Caco-2 (cell line): ENCODE measurements at regions of chr15 and their contacts with region 1.

Region 1: DNA sequence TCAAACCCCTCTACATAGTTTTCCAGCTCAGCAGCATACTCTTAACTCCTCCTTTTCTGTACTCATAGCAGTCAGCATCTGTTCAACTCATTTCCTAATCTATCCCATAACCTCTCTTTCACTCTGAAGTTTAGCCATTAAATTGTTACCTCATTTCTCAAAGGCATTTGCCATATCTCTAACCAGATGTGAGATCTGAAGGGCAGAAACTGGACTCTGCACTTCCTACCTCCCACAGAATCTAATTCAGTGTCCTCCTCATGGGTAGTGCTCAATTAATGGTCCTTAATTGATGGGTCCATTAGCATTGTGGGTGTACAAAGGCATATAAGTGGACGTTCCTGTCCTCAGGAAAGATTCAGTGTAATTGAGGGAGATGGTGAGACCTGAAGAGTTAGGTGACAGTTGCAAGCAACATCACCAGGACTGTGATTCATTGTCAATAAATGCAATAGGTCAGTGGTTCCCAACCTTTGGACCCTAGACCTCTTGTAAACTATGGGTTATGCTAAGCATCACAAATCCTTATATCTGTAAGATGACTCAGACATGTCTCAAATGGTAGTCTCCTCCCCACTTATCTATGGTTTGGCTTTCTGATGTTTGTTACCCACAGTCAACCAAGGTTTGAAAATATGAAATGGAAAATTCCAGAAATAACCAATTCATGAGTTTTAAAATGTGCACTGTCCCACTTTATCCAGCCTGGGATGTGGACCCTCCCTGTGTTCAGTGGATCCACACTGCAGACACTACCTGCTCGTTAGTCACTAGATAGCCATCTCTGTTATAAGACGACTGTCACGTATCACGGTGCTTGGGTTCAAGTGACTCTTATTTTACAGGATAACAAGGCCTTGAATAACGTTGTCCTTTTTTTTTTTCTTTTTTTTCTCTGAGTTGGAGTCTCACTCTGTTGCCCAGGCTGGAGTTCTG is 25.0 kb upstream of the UACA start:
- DNase-seq: peak; percentile 83 to 84
- H3K4me3 ChIP-seq: no peak overlapping the region
- H3K4me3 Mint-ChIP-seq: peak overlapping the region; percentile 55
- H3K27ac Mint-ChIP-seq: peak overlapping the region; percentile 91
- H3K4me1 ChIP-seq: peaks cover 84% of the 10 kb centered on the region
- H3K4me1 Mint-ChIP-seq: peaks cover 42% of the 10 kb centered on the region
- H3K27me3 ChIP-seq: no peaks in the 10 kb centered on the region
- H3K27me3 Mint-ChIP-seq: no peaks in the 10 kb centered on the region
- CTCF ChIP-seq: no peak

Region 2: GRCh38 chr15:69760890-69761568 is 1027.4 kb before region 1 on chr15:
- CTCF ChIA-PET with region 1: no interaction called
- POLR2A ChIA-PET with region 1: no interaction called
- intact Hi-C with region 1: no loop called
- DNase-seq: peak; percentile 32 to 48
- H3K4me3 ChIP-seq: no peak overlapping the region
- H3K4me3 Mint-ChIP-seq: no peak overlapping the region
- H3K27ac Mint-ChIP-seq: no peak overlapping the region
- H3K4me1 ChIP-seq: 0 out of 2 replicates have a peak, but pooled peaks cover 7% of the 10 kb centered on the region
- H3K4me1 Mint-ChIP-seq: peaks cover 16% of the 10 kb centered on the region
- H3K27me3 ChIP-seq: no peaks in the 10 kb centered on the region
- H3K27me3 Mint-ChIP-seq: peaks cover 2% of the 10 kb centered on the region
- CTCF ChIP-seq: no peak

Region 3: GRCh38 chr15:70713714-70714414 is 74.5 kb before region 1 on chr15:
- CTCF ChIA-PET with region 1: interaction called, 5 read pairs
- POLR2A ChIA-PET with region 1: no interaction called
- intact Hi-C with region 1: loop called (anchors 2 kb)
- DNase-seq: peak in 1 of 2 experiments; percentile 25
- H3K4me3 ChIP-seq: no peak overlapping the region
- H3K4me3 Mint-ChIP-seq: peak overlapping the region; percentile 60
- H3K27ac Mint-ChIP-seq: peak overlapping the region; percentile 34
- H3K4me1 ChIP-seq: peaks cover 89% of the 10 kb centered on the region
- H3K4me1 Mint-ChIP-seq: peaks cover 48% of the 10 kb centered on the region
- H3K27me3 ChIP-seq: no peaks in the 10 kb centered on the region
- H3K27me3 Mint-ChIP-seq: no peaks in the 10 kb centered on the region
- CTCF ChIP-seq: no peak

Region 4: DNA sequence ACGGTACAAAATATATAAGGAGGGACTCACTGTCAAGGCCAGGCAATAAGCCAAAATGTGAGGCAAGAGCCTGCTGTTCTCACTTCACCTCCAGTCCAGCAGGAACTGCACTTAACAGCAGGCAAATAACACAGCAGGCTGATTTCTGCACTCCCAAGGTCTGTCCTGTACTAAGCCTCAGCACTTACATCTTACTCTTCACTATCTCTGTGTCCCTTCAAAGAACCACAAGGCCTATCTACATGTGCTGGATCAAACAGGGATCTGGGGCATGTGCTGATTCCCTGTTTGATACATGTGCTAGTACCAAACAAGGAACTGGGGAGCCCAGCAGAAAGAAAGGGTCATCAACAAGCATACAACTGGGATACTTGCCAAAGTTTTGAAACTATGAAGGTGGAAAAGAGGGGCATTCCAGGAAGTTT is 47.3 kb before region 1 on chr15:
- CTCF ChIA-PET with region 1: no interaction called
- POLR2A ChIA-PET with region 1: no interaction called
- intact Hi-C with region 1: no loop called
- DNase-seq: no peak
- H3K4me3 ChIP-seq: no peak overlapping the region
- H3K4me3 Mint-ChIP-seq: no peak overlapping the region
- H3K27ac Mint-ChIP-seq: no peak overlapping the region
- H3K4me1 ChIP-seq: peaks cover 13% of the 10 kb centered on the region
- H3K4me1 Mint-ChIP-seq: peaks cover 18% of the 10 kb centered on the region
- H3K27me3 ChIP-seq: no peaks in the 10 kb centered on the region
- H3K27me3 Mint-ChIP-seq: no peaks in the 10 kb centered on the region
- CTCF ChIP-seq: no peak

Region 5: GRCh38 chr15:70812827-70813364 is 24.5 kb after region 1 on chr15:
- CTCF ChIA-PET with region 1: interaction called, 3 read pairs
- POLR2A ChIA-PET with region 1: no interaction called
- intact Hi-C with region 1: loop called (anchors 1 kb)
- DNase-seq: no peak
- H3K4me3 ChIP-seq: no peak overlapping the region
- H3K4me3 Mint-ChIP-seq: peak overlapping the region; percentile 72
- H3K27ac Mint-ChIP-seq: no peak overlapping the region
- H3K4me1 ChIP-seq: no peaks in the 10 kb centered on the region
- H3K4me1 Mint-ChIP-seq: peaks cover 25% of the 10 kb centered on the region
- H3K27me3 ChIP-seq: no peaks in the 10 kb centered on the region
- H3K27me3 Mint-ChIP-seq: no peaks in the 10 kb centered on the region
- CTCF ChIP-seq: no peak

Region 6: GRCh38 chr15:70955151-70955550 is 166.8 kb after region 1 on chr15:
- CTCF ChIA-PET with region 1: no interaction called
- POLR2A ChIA-PET with region 1: no interaction called
- intact Hi-C with region 1: no loop called
- DNase-seq: no peak
- H3K4me3 ChIP-seq: no peak overlapping the region
- H3K4me3 Mint-ChIP-seq: no peak overlapping the region
- H3K27ac Mint-ChIP-seq: no peak overlapping the region
- H3K4me1 ChIP-seq: no peaks in the 10 kb centered on the region
- H3K4me1 Mint-ChIP-seq: no peaks in the 10 kb centered on the region
- H3K27me3 ChIP-seq: no peaks in the 10 kb centered on the region
- H3K27me3 Mint-ChIP-seq: peaks cover 17% of the 10 kb centered on the region
- CTCF ChIP-seq: no peak